Activated B cell treated with CpG ODN at 0.5 μM for 24 hours (primary cell): ENCODE measurements at regions of chr3 and their contacts with region 1.

Region 1: DNA sequence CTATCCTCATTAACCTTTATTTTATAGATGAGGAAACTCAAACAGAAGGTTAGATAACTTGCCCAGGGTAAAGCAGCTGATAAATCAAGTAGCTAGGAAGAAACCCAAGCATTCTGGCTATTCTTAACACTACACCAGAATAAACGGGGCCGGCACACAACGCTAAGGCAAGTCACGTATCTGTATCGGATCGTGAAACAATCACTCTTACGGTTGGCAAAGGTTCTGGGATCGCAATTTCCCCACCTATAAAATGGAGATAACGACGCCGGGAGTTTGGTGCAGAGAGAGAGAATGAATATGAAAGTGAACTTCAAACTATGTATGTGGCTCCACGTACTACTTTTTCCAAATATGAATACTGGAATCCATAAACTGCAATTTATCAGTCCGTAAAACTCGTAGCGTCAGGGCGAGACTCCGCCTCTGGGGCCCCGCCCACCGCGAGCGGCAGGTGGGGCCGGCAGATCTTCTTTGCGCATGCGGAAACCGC is 252 bp upstream of the ARMC8 start:
- DNase-seq: no peak
- ATAC-seq: peak; percentile 94
- H3K4me3 Mint-ChIP-seq: peak overlapping the region; percentile 92
- H3K27ac Mint-ChIP-seq: peak overlapping the region; percentile 99
- H3K4me1 Mint-ChIP-seq: peaks cover 37% of the 10 kb centered on the region
- H3K27me3 Mint-ChIP-seq: peaks cover 5% of the 10 kb centered on the region
- CTCF ChIP-seq: no peak

Region 2: GRCh38 chr3:136861890-136862616 is 1324.8 kb before region 1 on chr3 and contains the start of gene NCK1:
- CTCF ChIA-PET with region 1: no interaction called
- POLR2A ChIA-PET with region 1: no interaction called
- intact Hi-C with region 1: loop called (anchors 5 kb)
- DNase-seq: peak; percentile 92
- ATAC-seq: peak; percentile 94
- H3K4me3 Mint-ChIP-seq: peak within 1 kb of the TSS; percentile 93
- H3K27ac Mint-ChIP-seq: peak within 1 kb of the TSS; percentile 95
- H3K4me1 Mint-ChIP-seq: peaks cover 43% of the 10 kb centered on the region
- H3K27me3 Mint-ChIP-seq: no peaks in the 10 kb centered on the region
- CTCF ChIP-seq: no peak
- total RNA-seq, gene NCK1: 29.7 and 30.8 TPM in 2 replicates

Region 3: GRCh38 chr3:138125548-138126221 is 61.2 kb before region 1 on chr3:
- CTCF ChIA-PET with region 1: no interaction called
- POLR2A ChIA-PET with region 1: no interaction called
- intact Hi-C with region 1: no loop called
- DNase-seq: no peak
- ATAC-seq: no peak
- H3K4me3 Mint-ChIP-seq: no peak overlapping the region
- H3K27ac Mint-ChIP-seq: no peak overlapping the region
- H3K4me1 Mint-ChIP-seq: no peaks in the 10 kb centered on the region
- H3K27me3 Mint-ChIP-seq: peaks cover 13% of the 10 kb centered on the region
- CTCF ChIP-seq: no peak

Region 4: GRCh38 chr3:138148503-138148902 is 38.3 kb before region 1 on chr3:
- CTCF ChIA-PET with region 1: no interaction called
- POLR2A ChIA-PET with region 1: no interaction called
- intact Hi-C with region 1: no loop called
- DNase-seq: no peak
- ATAC-seq: no peak
- H3K4me3 Mint-ChIP-seq: no peak overlapping the region
- H3K27ac Mint-ChIP-seq: no peak overlapping the region
- H3K4me1 Mint-ChIP-seq: no peaks in the 10 kb centered on the region
- H3K27me3 Mint-ChIP-seq: peaks cover 1% of the 10 kb centered on the region
- CTCF ChIP-seq: no peak

Region 5: GRCh38 chr3:138199851-138200250 is 13.0 kb after region 1 on chr3:
- CTCF ChIA-PET with region 1: no interaction called
- POLR2A ChIA-PET with region 1: no interaction called
- intact Hi-C with region 1: loop called (anchors 1 kb)
- DNase-seq: no peak
- ATAC-seq: no peak
- H3K4me3 Mint-ChIP-seq: no peak overlapping the region
- H3K27ac Mint-ChIP-seq: no peak overlapping the region
- H3K4me1 Mint-ChIP-seq: peaks cover 30% of the 10 kb centered on the region
- H3K27me3 Mint-ChIP-seq: no peaks in the 10 kb centered on the region
- CTCF ChIP-seq: no peak

Region 6: DNA sequence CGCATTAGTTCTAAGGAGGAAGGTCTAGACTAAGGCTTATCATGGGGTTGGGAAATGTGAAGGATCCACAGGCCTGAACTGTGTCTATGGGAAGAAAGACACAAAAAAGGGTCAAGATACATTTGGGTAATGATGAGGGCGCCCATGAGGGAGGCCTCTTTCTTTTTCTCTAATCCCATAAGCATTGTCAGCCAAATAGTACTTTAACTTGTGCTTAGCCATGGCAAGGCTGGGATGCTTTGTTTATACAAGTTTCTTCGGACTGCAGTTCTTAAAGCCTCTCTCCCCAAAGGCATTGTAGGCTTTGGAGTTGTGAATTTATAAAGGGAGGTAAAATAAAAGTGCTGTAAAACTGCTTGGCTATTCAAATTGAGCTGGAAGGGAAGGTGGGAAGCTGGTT is 23.7 kb after region 1 on chr3:
- CTCF ChIA-PET with region 1: no interaction called
- POLR2A ChIA-PET with region 1: no interaction called
- intact Hi-C with region 1: no loop called
- DNase-seq: no peak
- ATAC-seq: no peak
- H3K4me3 Mint-ChIP-seq: no peak overlapping the region
- H3K27ac Mint-ChIP-seq: no peak overlapping the region
- H3K4me1 Mint-ChIP-seq: peaks cover 15% of the 10 kb centered on the region
- H3K27me3 Mint-ChIP-seq: no peaks in the 10 kb centered on the region
- CTCF ChIP-seq: no peak

Region 7: GRCh38 chr3:138329127-138329983 is 142.5 kb after region 1 on chr3 and contains the start of gene NME9:
- CTCF ChIA-PET with region 1: no interaction called
- POLR2A ChIA-PET with region 1: no interaction called
- intact Hi-C with region 1: loop called (anchors 2 kb)
- DNase-seq: peak; percentile 56
- ATAC-seq: peak; percentile 90
- H3K4me3 Mint-ChIP-seq: peak within 1 kb of the TSS; percentile 88
- H3K27ac Mint-ChIP-seq: no peak within 1 kb of the TSS
- H3K4me1 Mint-ChIP-seq: peaks cover 13% of the 10 kb centered on the region
- H3K27me3 Mint-ChIP-seq: peaks cover 25% of the 10 kb centered on the region
- CTCF ChIP-seq: no peak
- total RNA-seq, gene NME9: not detected in 2 replicates

Region 8: GRCh38 chr3:138594150-138594934 is 407.5 kb after region 1 on chr3 and contains the start of gene CEP70:
- CTCF ChIA-PET with region 1: no interaction called
- POLR2A ChIA-PET with region 1: interaction called, 3 read pairs
- intact Hi-C with region 1: loop called (anchors 1 kb)
- DNase-seq: peak; percentile 77
- ATAC-seq: peak; percentile 94
- H3K4me3 Mint-ChIP-seq: peak within 1 kb of the TSS; percentile 90
- H3K27ac Mint-ChIP-seq: peak within 1 kb of the TSS; percentile 86
- H3K4me1 Mint-ChIP-seq: peaks cover 10% of the 10 kb centered on the region
- H3K27me3 Mint-ChIP-seq: no peaks in the 10 kb centered on the region
- CTCF ChIP-seq: peak; percentile 32
- total RNA-seq, gene CEP70: 5.9 and 11.0 TPM in 2 replicates

Region 9: GRCh38 chr3:138915503-138916498 is 729.0 kb after region 1 on chr3:
- CTCF ChIA-PET with region 1: interaction called, 4 read pairs
- POLR2A ChIA-PET with region 1: no interaction called
- intact Hi-C with region 1: loop called (anchors 2 kb)
- DNase-seq: peak; percentile 84
- ATAC-seq: peak; percentile 86
- H3K4me3 Mint-ChIP-seq: peak overlapping the region; percentile 83
- H3K27ac Mint-ChIP-seq: peak overlapping the region; percentile 75
- H3K4me1 Mint-ChIP-seq: peaks cover 5% of the 10 kb centered on the region
- H3K27me3 Mint-ChIP-seq: peaks cover 6% of the 10 kb centered on the region
- CTCF ChIP-seq: peak; percentile 78

Region 10: DNA sequence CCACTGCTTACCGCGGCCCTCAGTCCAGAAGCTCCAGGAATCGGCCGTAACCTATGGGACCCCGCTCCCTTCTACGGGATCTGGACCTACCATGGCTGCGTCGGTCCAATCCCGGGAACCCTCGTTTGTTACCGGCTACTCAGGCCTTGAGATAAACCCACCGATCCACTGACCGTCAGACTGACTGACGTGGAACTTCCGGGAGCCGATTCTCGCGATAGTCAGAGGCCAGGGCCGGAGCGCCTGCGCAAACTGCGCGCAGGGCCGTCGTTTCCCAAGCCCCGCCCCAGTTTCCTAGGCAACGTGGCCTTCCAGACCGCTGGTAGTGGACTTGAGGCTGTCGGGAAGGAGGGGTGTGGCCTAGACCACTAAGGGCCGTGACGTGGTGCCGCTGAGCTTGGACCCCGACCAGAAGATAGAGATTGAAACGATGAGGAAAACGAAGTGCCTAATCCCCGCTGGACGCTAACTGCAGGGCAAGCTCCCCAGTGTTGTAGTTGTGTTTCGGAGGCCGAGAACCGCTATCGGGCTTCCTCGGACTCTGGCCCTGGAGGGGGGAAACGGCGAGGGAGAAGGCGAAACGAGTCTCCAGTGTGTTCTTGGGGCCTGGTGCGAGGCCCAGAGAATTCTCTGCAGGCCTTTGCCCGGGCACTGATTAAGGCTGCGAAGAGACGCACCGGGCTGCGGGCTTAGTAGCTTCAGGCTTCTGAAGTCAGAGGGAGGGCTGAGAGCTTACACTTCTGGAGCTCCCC is 1202.8 kb after region 1 on chr3 and contains the start of gene COPB2:
- CTCF ChIA-PET with region 1: interaction called, 3 read pairs
- POLR2A ChIA-PET with region 1: interaction called, 4 read pairs
- intact Hi-C with region 1: loop called (anchors 1 kb)
- DNase-seq: peak; percentile 99
- ATAC-seq: peak; percentile 96
- H3K4me3 Mint-ChIP-seq: peak within 1 kb of the TSS; percentile 91
- H3K27ac Mint-ChIP-seq: peak within 1 kb of the TSS; percentile 94
- H3K4me1 Mint-ChIP-seq: peaks cover 45% of the 10 kb centered on the region
- H3K27me3 Mint-ChIP-seq: no peaks in the 10 kb centered on the region
- CTCF ChIP-seq: no peak
- total RNA-seq, gene COPB2: 87.0 and 91.4 TPM in 2 replicates